Activated CD4-positive, alpha-beta T cell treated with anti-CD3 and anti-CD28 coated beads, Interleukin-2, amount 10 ng/mL, durations not matched to agents 7 days and 5 days (primary cell): ENCODE measurements at regions of chr10 and their contacts with region 1.

Region 1: GRCh38 chr10:7738536-7739407 is 35.7 kb downstream of the ITIH2 start:
- DNase-seq: no peak
- H3K4me3 Mint-ChIP-seq: no peak overlapping the region
- H3K27ac Mint-ChIP-seq: no peak overlapping the region
- H3K4me1 Mint-ChIP-seq: no peaks in the 10 kb centered on the region
- H3K27me3 Mint-ChIP-seq: no peaks in the 10 kb centered on the region

Region 2: DNA sequence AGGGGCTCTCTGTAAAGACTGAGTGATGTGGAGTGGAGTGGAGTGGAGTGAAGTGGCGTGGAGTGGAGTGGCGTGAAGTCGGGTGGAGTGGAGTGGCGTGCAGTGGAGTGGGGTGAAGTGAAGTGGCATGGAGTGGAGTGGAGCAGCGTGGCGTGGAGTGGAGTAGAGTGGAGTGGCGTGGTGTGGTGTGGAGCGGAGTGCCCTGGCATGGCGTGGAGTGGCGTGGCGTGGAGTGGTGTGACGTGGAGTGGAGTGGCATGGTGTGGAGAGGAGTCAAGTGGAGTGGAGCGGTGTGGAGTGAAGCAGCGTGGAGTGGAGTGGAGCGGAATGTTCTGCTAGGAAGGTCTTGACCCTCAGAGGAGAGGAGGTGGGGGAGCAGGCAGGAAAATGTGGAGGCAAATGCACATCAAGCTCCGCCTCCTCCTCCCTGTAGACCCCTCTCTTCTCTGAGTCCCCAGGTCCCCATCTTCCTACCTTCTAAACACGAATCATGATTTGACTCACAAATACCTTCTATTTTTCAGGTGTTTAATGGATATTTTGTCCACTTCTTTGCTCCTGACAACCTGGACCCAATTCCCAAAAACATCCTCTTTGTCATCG is 15.7 kb before region 1 on chr10:
- CTCF ChIA-PET with region 1: no interaction called
- POLR2A ChIA-PET with region 1: interaction called, 13 read pairs
- DNase-seq: no peak
- H3K4me3 Mint-ChIP-seq: no peak overlapping the region
- H3K27ac Mint-ChIP-seq: no peak overlapping the region
- H3K4me1 Mint-ChIP-seq: peaks cover 4% of the 10 kb centered on the region
- H3K27me3 Mint-ChIP-seq: peaks cover 7% of the 10 kb centered on the region